ENCODE measurements at regions of chr16 and their contacts with region 1.

Region 1: GRCh38 chr16:14486520-14487303 is 143.3 kb downstream of the PARN start:
- DNase-seq: peak; percentile 86

Region 2: GRCh38 chr16:14501331-14502255 is 14.9 kb after region 1 on chr16:
- intact Hi-C with region 1: loop called (anchors 2 kb)
- DNase-seq: peak; percentile 89

Region 3: DNA sequence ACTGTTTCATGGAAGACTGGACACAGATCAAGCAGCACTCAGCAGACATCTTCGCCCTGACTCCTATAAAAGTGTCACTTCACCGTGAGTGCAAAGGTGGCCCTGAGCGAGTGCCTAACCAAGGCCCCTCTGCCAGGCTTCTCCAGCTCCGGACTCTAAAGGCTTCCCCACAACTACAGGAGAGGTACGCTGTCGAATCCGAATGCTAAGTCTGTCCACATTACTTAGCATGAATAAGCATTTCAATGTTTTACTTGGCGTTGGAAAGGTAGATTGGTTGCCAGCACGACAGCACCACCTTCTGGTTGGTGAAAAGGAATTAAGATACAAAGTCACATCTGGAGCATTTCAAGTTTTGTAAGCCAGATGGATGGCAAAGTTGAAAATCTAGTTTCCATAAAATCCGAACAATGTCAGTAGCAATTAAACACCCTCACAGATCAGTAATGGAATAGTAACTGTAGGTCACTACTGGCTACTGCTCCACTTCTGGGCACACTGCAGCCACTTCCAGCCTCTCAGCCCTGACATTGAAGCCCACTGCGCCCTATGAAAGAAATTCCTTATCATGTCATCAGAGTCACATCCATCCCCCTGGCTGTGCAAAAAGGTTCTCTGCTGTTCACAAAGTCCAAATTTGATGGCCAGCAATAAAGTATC is 42.4 kb after region 1 on chr16:
- intact Hi-C with region 1: loop called (anchors 5 kb)
- DNase-seq: no peak